ENCODE measurements at regions of chr22 and their contacts with region 1.

Region 1: GRCh38 chr22:24156913-24157821 is 24.1 kb upstream of the SUSD2 start:
- DNase-seq: peak; percentile 87 to 94
- H3K4me3 ChIP-seq: peak overlapping the region; percentile 82 to 96 (median 83)
- H3K27ac ChIP-seq: peak overlapping the region; percentile 42 to 89 (median 86)
- H3K4me1 ChIP-seq: peaks cover 47 to 86% (median 72%) of the 10 kb centered on the region in 4 donors
- H3K27me3 ChIP-seq: no peaks in the 10 kb centered on the region
- CTCF ChIP-seq: peak in 5 of 7 experiments; percentile 64 to 86 (median 78)
- EP300 ChIP-seq: no peak
- POLR2A ChIP-seq: no peak

Region 2: DNA sequence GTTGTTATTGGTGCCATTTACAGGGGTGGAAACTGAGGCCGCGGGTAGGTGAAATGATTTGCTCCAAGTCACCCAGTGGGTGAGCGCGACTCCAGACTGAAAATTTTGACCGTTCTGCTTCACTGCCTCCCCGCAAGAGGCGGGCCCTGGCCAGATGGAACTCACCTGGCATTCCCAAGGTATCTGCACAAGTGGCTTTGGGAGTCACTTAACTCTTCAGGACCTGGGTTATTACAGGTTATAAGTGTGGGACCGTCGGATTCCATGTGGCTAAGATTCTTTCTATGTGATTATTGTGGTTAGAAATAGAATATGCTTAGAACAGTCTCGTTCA is 145.5 kb before region 1 on chr22:
- intact Hi-C with region 1: loop called (anchors 10 kb)
- DNase-seq: peak in 1 of 2 donors; percentile 55
- H3K4me3 ChIP-seq: peak overlapping the region; percentile 81 to 97 (median 92)
- H3K27ac ChIP-seq: peak overlapping the region; percentile 73 to 93 (median 87)
- H3K4me1 ChIP-seq: peaks cover 21 to 53% (median 39%) of the 10 kb centered on the region in 4 donors
- H3K27me3 ChIP-seq: no peaks in the 10 kb centered on the region
- CTCF ChIP-seq: no peak
- EP300 ChIP-seq: no peak
- POLR2A ChIP-seq: no peak

Region 3: GRCh38 chr22:24106385-24107381 is 50.5 kb before region 1 on chr22:
- intact Hi-C with region 1: loop called (anchors 10 kb)
- DNase-seq: no peak
- H3K4me3 ChIP-seq: no peak overlapping the region
- H3K27ac ChIP-seq: peak overlapping the region in 4 of 5 donors; percentile 48 to 78 (median 64)
- H3K4me1 ChIP-seq: peaks cover 5 to 39% (median 20%) of the 10 kb centered on the region in 4 donors
- H3K27me3 ChIP-seq: no peaks in the 10 kb centered on the region
- CTCF ChIP-seq: peak in 2 of 7 experiments; percentile 6 to 17
- EP300 ChIP-seq: no peak
- POLR2A ChIP-seq: no peak